ENCODE measurements at regions of chr18 and their contacts with region 1.

Region 1: GRCh38 chr18:38747153-38747552 is 1181.6 kb upstream of the CELF4 start:
- DNase-seq: no peak
- H3K4me3 ChIP-seq: no peak overlapping the region
- H3K27ac ChIP-seq: no peak overlapping the region
- H3K4me1 ChIP-seq: no peaks in the 10 kb centered on the region
- H3K27me3 ChIP-seq: no peaks in the 10 kb centered on the region

Region 2: GRCh38 chr18:37889963-37890362 is 857.2 kb before region 1 on chr18:
- in situ Hi-C with region 1: no loop called
- DNase-seq: no peak
- H3K4me3 ChIP-seq: no peak overlapping the region
- H3K27ac ChIP-seq: no peak overlapping the region
- H3K4me1 ChIP-seq: no peaks in the 10 kb centered on the region
- H3K27me3 ChIP-seq: no peaks in the 10 kb centered on the region

Region 3: DNA sequence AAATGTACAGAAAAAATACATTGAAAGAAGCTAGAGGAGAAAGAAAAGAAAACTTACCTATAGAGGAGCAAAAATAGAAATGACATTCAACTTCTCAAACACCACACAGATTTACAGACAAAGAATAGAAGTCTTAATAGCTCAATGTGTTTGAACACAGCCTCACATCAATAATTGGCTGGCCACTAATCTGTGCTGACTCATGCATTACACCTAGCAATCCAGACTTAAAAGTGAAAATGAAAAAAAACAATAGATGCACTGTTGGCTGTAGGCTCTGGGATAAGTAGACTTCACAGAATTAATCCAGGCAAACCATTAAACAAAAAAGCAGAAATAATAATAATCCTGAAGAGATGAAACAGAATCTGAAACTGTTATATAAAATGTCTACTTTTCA is 220.2 kb before region 1 on chr18:
- in situ Hi-C with region 1: no loop called
- DNase-seq: no peak
- H3K4me3 ChIP-seq: no peak overlapping the region
- H3K27ac ChIP-seq: no peak overlapping the region
- H3K4me1 ChIP-seq: no peaks in the 10 kb centered on the region
- H3K27me3 ChIP-seq: no peaks in the 10 kb centered on the region

Region 4: DNA sequence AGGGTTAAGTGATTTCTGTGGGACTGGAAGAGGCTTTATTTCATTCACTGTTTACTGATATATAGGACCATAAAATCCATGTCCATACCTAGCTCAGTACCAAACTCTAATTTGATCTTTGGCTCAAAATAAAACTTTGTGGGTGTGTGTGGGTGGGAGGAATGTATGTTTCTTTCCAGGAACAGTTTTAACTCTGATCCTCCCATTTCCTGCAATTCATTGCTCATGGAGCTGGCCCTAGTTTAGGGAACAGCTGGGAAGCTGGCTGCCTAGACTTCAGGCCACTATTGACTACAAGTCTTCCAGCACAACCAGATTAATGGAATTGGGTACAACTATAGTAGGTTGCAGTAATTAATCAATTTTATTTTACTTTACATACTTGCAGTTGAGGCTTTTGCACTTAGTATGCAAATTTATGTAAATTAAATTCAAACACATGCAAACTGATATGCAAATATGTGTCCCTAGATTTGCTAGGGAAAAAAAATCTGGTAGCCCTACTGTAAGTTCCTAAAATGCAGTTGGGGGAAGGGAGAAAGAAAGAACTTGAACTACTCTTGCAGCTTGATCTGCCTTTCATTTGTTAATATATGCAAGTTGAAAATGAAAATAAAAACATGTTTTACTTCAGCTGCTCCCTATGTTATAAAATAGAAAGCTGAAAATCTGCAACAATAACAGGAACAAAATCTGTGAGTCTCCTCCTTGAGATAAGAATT is 111.3 kb before region 1 on chr18:
- in situ Hi-C with region 1: loop called (anchors 25 kb)
- DNase-seq: no peak
- H3K4me3 ChIP-seq: no peak overlapping the region
- H3K27ac ChIP-seq: no peak overlapping the region
- H3K4me1 ChIP-seq: no peaks in the 10 kb centered on the region
- H3K27me3 ChIP-seq: no peaks in the 10 kb centered on the region

Region 5: DNA sequence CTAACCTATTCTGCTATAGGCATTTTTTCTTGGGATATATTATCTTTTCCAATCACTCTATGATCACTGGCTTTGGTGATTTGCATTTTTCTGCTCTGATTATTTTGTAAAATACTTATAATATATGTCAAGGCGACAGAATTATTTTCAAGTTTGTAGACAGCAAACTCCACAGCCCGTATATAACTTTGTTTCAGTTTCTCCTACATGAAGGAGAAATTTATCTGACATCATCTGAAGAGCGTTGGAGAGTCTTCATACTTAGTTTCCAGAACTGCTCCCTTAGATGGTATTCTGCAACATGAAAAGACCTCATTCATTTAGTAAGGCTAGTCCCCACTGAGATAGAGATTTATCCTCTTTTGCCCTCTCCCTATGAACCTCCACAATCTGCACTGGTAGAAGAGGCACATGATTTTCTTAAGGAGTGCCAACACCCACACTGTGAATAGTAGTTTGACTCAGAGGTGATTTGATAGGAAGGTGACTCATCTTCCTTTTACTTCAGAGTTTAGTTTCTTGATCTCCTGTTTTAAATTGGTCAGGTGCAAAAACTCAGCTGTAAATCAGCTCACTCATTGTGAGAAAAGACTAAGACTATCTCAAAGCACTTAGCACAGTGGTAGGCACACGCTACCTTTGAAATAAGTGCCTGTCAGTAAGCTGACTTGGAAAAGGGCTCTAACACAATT is 667.0 kb after region 1 on chr18:
- in situ Hi-C with region 1: no loop called
- DNase-seq: peak; percentile 80
- H3K4me3 ChIP-seq: no peak overlapping the region
- H3K27ac ChIP-seq: no peak overlapping the region
- H3K4me1 ChIP-seq: peaks cover 8% of the 10 kb centered on the region; the same call in 1 of the 2 replicates
- H3K27me3 ChIP-seq: no peaks in the 10 kb centered on the region

Measured in GM23248 (cell line).